Right lobe of liver (tissue), 6 donors: ENCODE measurements at regions of chr11 and their contacts with region 1.

Region 1: GRCh38 chr11:11519184-11519583 is 102.6 kb downstream of the GALNT18 start:
- DNase-seq: no peak
- ATAC-seq: no peak
- H3K4me3 ChIP-seq: no peak overlapping the region
- H3K27ac ChIP-seq: no peak overlapping the region
- H3K4me1 ChIP-seq: no peaks in the 10 kb centered on the region
- H3K27me3 ChIP-seq: no peaks in the 10 kb centered on the region
- CTCF ChIP-seq: no peak
- POLR2A ChIP-seq: no peak

Region 2: GRCh38 chr11:12263141-12263693 is 744.0 kb after region 1 on chr11:
- intact Hi-C with region 1: loop called in 1 of 2 experiments (anchors 5 kb)
- DNase-seq: no peak
- ATAC-seq: no peak
- H3K4me3 ChIP-seq: no peak overlapping the region
- H3K27ac ChIP-seq: no peak overlapping the region
- H3K4me1 ChIP-seq: no peaks in the 10 kb centered on the region
- H3K27me3 ChIP-seq: no peaks in the 10 kb centered on the region
- CTCF ChIP-seq: no peak
- POLR2A ChIP-seq: no peak